GM12878 (cell line): ENCODE measurements at regions of chr6 and their contacts with region 1.

Region 1: GRCh38 chr6:136792410-136793262 is at the start of gene MAP3K5:
- DNase-seq: no peak
- ATAC-seq: peak; percentile 76
- H3K4me3 ChIP-seq: peak within 1 kb of the TSS; percentile 71
- H3K27ac ChIP-seq: peak within 1 kb of the TSS; percentile 98
- H3K4me1 ChIP-seq: peaks cover 6% of the 10 kb centered on the region
- H3K27me3 ChIP-seq: no peaks in the 10 kb centered on the region
- CTCF ChIP-seq: peak; percentile 79 to 91 (median 84)
- EP300 ChIP-seq: peak in 1 of 2 experiments; percentile 4; a peak in 1 of 4 replicates
- POLR2A ChIP-seq: peak; percentile 87
- RAD21 ChIP-seq: peak; percentile 98
- polyA plus RNA-seq, gene MAP3K5: 5.4 to 11.1 TPM

Region 2: DNA sequence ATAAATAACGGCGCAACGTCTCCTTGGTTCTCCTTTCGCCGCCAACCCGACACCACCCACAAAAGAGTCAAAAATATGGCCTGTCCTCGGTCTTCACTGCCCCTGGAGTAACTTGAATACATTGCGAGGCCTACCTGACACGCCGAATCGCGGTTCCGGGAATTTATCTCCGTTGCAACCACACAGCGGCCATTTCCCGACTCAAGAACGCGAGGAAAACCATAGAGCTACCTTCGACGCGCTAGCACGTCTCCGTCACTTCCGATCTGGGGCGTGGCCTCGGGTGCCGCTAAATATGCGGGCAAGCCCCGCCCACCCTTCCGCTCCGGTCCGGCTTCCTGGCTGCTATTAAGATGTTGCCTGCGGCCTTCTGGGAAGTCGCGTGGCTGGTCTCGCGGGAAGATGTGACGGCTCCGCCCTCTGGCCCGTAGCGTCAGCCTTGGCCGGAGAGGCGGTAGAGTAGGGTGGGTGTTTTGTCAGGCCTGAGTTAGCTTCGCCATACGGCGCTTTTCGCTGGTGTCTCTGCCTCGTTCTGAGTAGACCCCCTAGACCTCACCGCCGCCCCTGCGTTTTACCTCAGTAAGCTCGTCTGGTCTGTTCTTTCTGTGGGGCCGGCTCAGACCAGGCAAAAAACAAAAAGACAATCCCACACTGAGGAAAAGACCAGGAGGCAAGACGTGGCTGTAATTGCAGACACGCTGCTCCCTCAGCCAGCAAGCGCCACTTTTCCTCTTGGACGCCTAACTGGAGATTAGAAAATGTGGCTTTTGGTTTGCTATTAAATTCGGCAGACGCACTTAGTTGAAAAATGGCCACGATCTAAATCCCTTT is 502.8 kb before region 1 on chr6 and contains the start of gene BCLAF1:
- CTCF ChIA-PET with region 1: interaction called, 4 read pairs
- POLR2A ChIA-PET with region 1: interaction called, 3 read pairs
- RAD21 ChIA-PET with region 1: interaction called, 5 read pairs
- SMC1A ChIA-PET with region 1: no interaction called
- in situ Hi-C with region 1: loop called (anchors 10 kb)
- intact Hi-C with region 1: no loop called
- DNase-seq: peak; percentile 98
- ATAC-seq: peak; percentile 93
- H3K4me3 ChIP-seq: peak within 1 kb of the TSS; percentile 72
- H3K27ac ChIP-seq: peak within 1 kb of the TSS; percentile 100
- H3K4me1 ChIP-seq: peaks cover 10% of the 10 kb centered on the region; the same call in 1 of the 2 replicates
- H3K27me3 ChIP-seq: no peaks in the 10 kb centered on the region; a peak in 1 of 4 replicates
- CTCF ChIP-seq: no peak
- EP300 ChIP-seq: 0 out of 4 replicates have a peak, but pooled peaks of 1 of the 2 experiments have one; percentile 21
- POLR2A ChIP-seq: peak; percentile 97
- RAD21 ChIP-seq: no peak
- polyA plus RNA-seq, gene BCLAF1: 56.0 to 62.1 TPM

Region 3: GRCh38 chr6:136628996-136629395 is 163.6 kb before region 1 on chr6:
- CTCF ChIA-PET with region 1: interaction called, 4 read pairs
- POLR2A ChIA-PET with region 1: no interaction called
- RAD21 ChIA-PET with region 1: interaction called, 12 read pairs
- SMC1A ChIA-PET with region 1: interaction called, 3 read pairs
- in situ Hi-C with region 1: no loop called
- intact Hi-C with region 1: no loop called
- DNase-seq: no peak
- ATAC-seq: no peak
- H3K4me3 ChIP-seq: no peak overlapping the region
- H3K27ac ChIP-seq: no peak overlapping the region
- H3K4me1 ChIP-seq: no peaks in the 10 kb centered on the region
- H3K27me3 ChIP-seq: no peaks in the 10 kb centered on the region
- CTCF ChIP-seq: no peak
- EP300 ChIP-seq: no peak
- POLR2A ChIP-seq: no peak
- RAD21 ChIP-seq: no peak

Region 4: DNA sequence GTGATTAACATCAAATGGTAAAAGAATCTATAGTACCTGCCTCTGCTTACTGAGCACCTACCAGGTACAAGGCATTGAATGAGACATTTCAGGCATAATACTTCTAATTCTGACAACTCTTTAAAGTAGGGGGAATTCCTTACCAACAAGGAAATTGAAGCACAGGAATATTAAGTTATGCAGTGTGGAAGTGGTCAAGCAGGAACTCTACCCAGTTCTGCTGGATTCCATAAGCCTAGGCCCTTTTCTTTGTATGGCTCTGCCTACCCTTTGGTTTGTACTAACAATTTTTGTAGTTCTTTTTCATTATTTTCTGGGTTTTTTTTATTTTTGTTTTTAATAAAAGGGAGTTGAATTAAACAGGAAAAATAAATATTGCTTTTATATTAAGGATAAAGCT is 114.8 kb before region 1 on chr6:
- CTCF ChIA-PET with region 1: interaction called, 11 read pairs
- POLR2A ChIA-PET with region 1: no interaction called
- RAD21 ChIA-PET with region 1: interaction called, 8 read pairs
- SMC1A ChIA-PET with region 1: interaction called, 12 read pairs
- in situ Hi-C with region 1: no loop called
- intact Hi-C with region 1: no loop called
- DNase-seq: no peak
- ATAC-seq: no peak
- H3K4me3 ChIP-seq: no peak overlapping the region
- H3K27ac ChIP-seq: no peak overlapping the region
- H3K4me1 ChIP-seq: no peaks in the 10 kb centered on the region
- H3K27me3 ChIP-seq: no peaks in the 10 kb centered on the region
- CTCF ChIP-seq: no peak
- EP300 ChIP-seq: no peak
- POLR2A ChIP-seq: no peak
- RAD21 ChIP-seq: no peak

Region 5: GRCh38 chr6:136716917-136717715 is 75.5 kb before region 1 on chr6:
- CTCF ChIA-PET with region 1: interaction called, 136 read pairs
- POLR2A ChIA-PET with region 1: interaction called, 265 read pairs
- RAD21 ChIA-PET with region 1: interaction called, 405 read pairs
- SMC1A ChIA-PET with region 1: interaction called, 446 read pairs
- in situ Hi-C with region 1: loop called (anchors 5 kb)
- intact Hi-C with region 1: loop called (anchors 1 kb)
- DNase-seq: peak; percentile 47
- ATAC-seq: peak; percentile 48
- H3K4me3 ChIP-seq: peak overlapping the region; percentile 49
- H3K27ac ChIP-seq: peak overlapping the region; percentile 97
- H3K4me1 ChIP-seq: peaks cover 38% of the 10 kb centered on the region
- H3K27me3 ChIP-seq: no peaks in the 10 kb centered on the region
- CTCF ChIP-seq: no peak
- EP300 ChIP-seq: no peak
- POLR2A ChIP-seq: no peak
- RAD21 ChIP-seq: no peak

Region 6: GRCh38 chr6:136737871-136738691 is 54.6 kb before region 1 on chr6:
- CTCF ChIA-PET with region 1: interaction called, 34 read pairs
- POLR2A ChIA-PET with region 1: interaction called, 4 read pairs
- RAD21 ChIA-PET with region 1: interaction called, 56 read pairs
- SMC1A ChIA-PET with region 1: interaction called, 48 read pairs
- in situ Hi-C with region 1: no loop called
- intact Hi-C with region 1: no loop called
- DNase-seq: no peak
- ATAC-seq: no peak
- H3K4me3 ChIP-seq: no peak overlapping the region
- H3K27ac ChIP-seq: no peak overlapping the region
- H3K4me1 ChIP-seq: peaks cover 7% of the 10 kb centered on the region; the same call in 1 of the 2 replicates
- H3K27me3 ChIP-seq: no peaks in the 10 kb centered on the region
- CTCF ChIP-seq: no peak
- EP300 ChIP-seq: no peak
- POLR2A ChIP-seq: no peak
- RAD21 ChIP-seq: no peak

Region 7: DNA sequence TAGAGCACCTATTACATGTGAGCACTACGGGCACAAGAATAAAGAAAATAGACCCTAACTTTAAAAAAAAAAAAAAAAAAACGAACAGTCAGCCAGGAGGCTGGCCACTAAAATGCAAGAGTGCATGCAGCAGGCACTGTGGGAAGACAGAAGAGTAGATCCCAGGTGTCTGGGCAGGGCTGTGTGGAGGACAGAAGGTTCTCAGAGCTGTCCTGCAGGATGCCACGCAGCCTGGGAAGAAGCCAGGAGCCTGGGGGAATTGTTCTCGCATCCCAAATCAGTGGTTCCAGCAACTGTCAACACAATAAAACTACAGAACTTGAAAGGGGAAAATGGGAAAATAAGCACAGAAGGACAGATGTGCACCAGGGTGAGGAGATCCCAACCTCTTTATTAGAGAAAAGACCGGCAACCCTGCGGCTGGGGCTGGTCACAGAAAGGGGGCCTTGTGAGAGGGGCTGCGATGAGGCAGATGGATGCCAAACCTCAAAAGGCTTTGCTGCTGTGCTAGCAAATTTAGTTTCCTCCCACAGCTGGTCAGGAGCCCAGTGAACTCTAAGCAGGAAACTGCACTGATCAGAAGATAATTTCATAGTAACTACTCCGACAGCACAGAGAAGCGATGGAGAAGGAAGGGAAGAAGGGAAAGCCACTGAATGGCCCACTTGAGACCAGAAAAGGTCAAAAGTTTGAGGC is 31.3 kb before region 1 on chr6:
- CTCF ChIA-PET with region 1: interaction called, 107 read pairs
- POLR2A ChIA-PET with region 1: interaction called, 252 read pairs
- RAD21 ChIA-PET with region 1: interaction called, 363 read pairs
- SMC1A ChIA-PET with region 1: interaction called, 368 read pairs
- in situ Hi-C with region 1: no loop called
- intact Hi-C with region 1: loop called (anchors 1 kb)
- DNase-seq: no peak
- ATAC-seq: peak; percentile 25
- H3K4me3 ChIP-seq: peak overlapping the region; percentile 61
- H3K27ac ChIP-seq: peak overlapping the region; percentile 97
- H3K4me1 ChIP-seq: peaks cover 61% of the 10 kb centered on the region
- H3K27me3 ChIP-seq: no peaks in the 10 kb centered on the region
- CTCF ChIP-seq: no peak
- EP300 ChIP-seq: 0 out of 4 replicates have a peak, but pooled peaks of 1 of the 2 experiments have one; percentile 33
- POLR2A ChIP-seq: 0 out of 2 replicates have a peak, but pooled peaks have one; percentile 32
- RAD21 ChIP-seq: no peak